Head of caudate nucleus (tissue), 42 donors: ENCODE measurements at regions of chr15 and their contacts with region 1.

Region 1: DNA sequence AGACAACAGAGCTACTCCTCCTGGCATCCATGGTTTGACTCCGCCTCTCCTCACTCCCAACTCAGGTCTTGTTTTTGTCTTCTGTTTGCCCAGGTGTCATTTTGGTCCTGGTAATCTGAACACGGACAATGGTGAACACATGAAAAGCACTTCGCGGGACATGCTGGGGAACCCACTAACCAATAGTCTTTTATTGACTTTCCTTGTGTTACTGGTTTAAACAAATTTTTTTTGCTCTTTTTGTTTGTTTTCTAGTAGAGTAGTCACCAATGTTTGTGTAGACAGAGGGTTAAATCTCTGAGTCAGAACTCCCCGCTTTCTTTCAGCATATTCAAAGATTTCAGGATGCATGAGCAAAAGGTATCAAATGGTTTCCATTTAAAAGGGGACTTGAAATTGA is 38.3 kb downstream of the LARP6 start:
- DNase-seq: no peak

Region 2: GRCh38 chr15:70679919-70680231 is 135.8 kb before region 1 on chr15:
- intact Hi-C with region 1: loop called (anchors 10 kb)
- DNase-seq: no peak

Region 3: GRCh38 chr15:70964058-70964457 is 148.4 kb after region 1 on chr15:
- intact Hi-C with region 1: no loop called
- DNase-seq: no peak